IMR-90 (cell line): ENCODE measurements at regions of chr5 and their contacts with region 1.

Region 1: GRCh38 chr5:43019614-43020293 is 20.4 kb downstream of the ANXA2R start:
- DNase-seq: peak; percentile 91
- ATAC-seq: peak; percentile 50
- H3K4me3 ChIP-seq: peak overlapping the region; percentile 64
- H3K27ac ChIP-seq: peak overlapping the region; percentile 96
- H3K4me1 ChIP-seq: peaks cover 8% of the 10 kb centered on the region
- H3K27me3 ChIP-seq: no peaks in the 10 kb centered on the region
- CTCF ChIP-seq: peak; percentile 49
- POLR2A ChIP-seq: no peak
- RAD21 ChIP-seq: 0 out of 2 replicates have a peak, but pooled peaks have one; percentile 29

Region 2: GRCh38 chr5:42522783-42523182 is 497.0 kb before region 1 on chr5:
- CTCF ChIA-PET with region 1: no interaction called
- POLR2A ChIA-PET with region 1: no interaction called
- dilution Hi-C with region 1: no loop called
- in situ Hi-C with region 1: no loop called
- intact Hi-C with region 1: no loop called
- DNase-seq: no peak
- ATAC-seq: no peak
- H3K4me3 ChIP-seq: no peak overlapping the region
- H3K27ac ChIP-seq: no peak overlapping the region
- H3K4me1 ChIP-seq: no peaks in the 10 kb centered on the region
- H3K27me3 ChIP-seq: no peaks in the 10 kb centered on the region
- CTCF ChIP-seq: no peak
- POLR2A ChIP-seq: no peak
- RAD21 ChIP-seq: no peak

Region 3: DNA sequence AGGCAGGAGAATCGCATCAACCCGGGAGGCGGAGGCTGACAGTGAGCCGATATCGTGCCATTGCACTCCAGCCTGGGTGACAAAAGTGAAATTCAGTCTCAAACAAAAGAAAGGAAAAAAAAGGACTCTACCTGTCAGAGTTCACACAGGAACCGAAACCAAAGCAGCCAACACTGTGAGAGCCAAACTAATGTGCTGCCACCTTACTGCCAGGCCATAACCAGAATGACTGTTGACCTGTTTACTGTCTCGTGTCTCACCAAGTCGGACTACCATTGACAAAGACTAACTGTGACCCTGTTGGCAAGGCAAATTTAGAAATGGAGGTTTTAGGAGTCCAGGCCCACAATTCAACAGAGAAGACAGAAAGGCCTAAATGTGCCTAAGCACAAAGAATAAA is 92.0 kb before region 1 on chr5:
- CTCF ChIA-PET with region 1: no interaction called
- POLR2A ChIA-PET with region 1: no interaction called
- dilution Hi-C with region 1: no loop called
- in situ Hi-C with region 1: no loop called
- intact Hi-C with region 1: no loop called
- DNase-seq: no peak
- ATAC-seq: no peak
- H3K4me3 ChIP-seq: no peak overlapping the region
- H3K27ac ChIP-seq: no peak overlapping the region
- H3K4me1 ChIP-seq: 0 out of 2 replicates have a peak, but pooled peaks cover 2% of the 10 kb centered on the region
- H3K27me3 ChIP-seq: no peaks in the 10 kb centered on the region; the same call in 1 of the 2 replicates
- CTCF ChIP-seq: no peak
- POLR2A ChIP-seq: no peak
- RAD21 ChIP-seq: no peak

Region 4: GRCh38 chr5:43008369-43009153 is 11.2 kb before region 1 on chr5:
- CTCF ChIA-PET with region 1: interaction called, 4 read pairs
- POLR2A ChIA-PET with region 1: interaction called, 7 read pairs
- dilution Hi-C with region 1: no loop called
- in situ Hi-C with region 1: no loop called
- intact Hi-C with region 1: loop called (anchors 1 kb)
- DNase-seq: peak; percentile 93
- ATAC-seq: peak; percentile 57
- H3K4me3 ChIP-seq: peak overlapping the region; percentile 61
- H3K27ac ChIP-seq: peak overlapping the region; percentile 93
- H3K4me1 ChIP-seq: peaks cover 19% of the 10 kb centered on the region
- H3K27me3 ChIP-seq: no peaks in the 10 kb centered on the region
- CTCF ChIP-seq: 0 out of 2 replicates have a peak, but pooled peaks have one; percentile 7
- POLR2A ChIP-seq: no peak
- RAD21 ChIP-seq: no peak

Region 5: DNA sequence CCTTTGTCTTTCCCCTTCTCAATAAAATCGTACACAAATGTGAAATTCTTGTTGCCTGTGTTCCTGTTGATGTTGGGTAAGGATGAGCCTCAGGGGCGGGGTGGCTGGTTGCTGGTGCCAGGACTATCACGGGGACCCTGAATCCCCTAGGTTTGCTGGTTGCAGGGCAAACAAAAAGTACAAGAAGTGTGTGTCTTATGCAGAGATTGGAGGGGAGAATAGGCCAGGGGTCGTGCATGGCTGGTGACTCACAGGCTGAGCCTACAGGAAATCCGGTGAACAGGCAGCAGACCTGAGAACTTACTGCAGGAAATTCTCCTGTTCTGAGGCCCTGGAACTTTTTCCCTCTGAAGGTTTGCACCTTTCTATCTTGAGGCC is 14.8 kb after region 1 on chr5:
- CTCF ChIA-PET with region 1: interaction called, 6 read pairs
- POLR2A ChIA-PET with region 1: interaction called, 4 read pairs
- dilution Hi-C with region 1: no loop called
- in situ Hi-C with region 1: no loop called
- intact Hi-C with region 1: loop called (anchors 2 kb)
- DNase-seq: peak; percentile 85
- ATAC-seq: peak; percentile 22
- H3K4me3 ChIP-seq: peak overlapping the region; percentile 32
- H3K27ac ChIP-seq: peak overlapping the region; percentile 94
- H3K4me1 ChIP-seq: peaks cover 8% of the 10 kb centered on the region
- H3K27me3 ChIP-seq: no peaks in the 10 kb centered on the region
- CTCF ChIP-seq: no peak
- POLR2A ChIP-seq: no peak
- RAD21 ChIP-seq: no peak